ENCODE measurements at regions of chr18 and their contacts with region 1.

Region 1: DNA sequence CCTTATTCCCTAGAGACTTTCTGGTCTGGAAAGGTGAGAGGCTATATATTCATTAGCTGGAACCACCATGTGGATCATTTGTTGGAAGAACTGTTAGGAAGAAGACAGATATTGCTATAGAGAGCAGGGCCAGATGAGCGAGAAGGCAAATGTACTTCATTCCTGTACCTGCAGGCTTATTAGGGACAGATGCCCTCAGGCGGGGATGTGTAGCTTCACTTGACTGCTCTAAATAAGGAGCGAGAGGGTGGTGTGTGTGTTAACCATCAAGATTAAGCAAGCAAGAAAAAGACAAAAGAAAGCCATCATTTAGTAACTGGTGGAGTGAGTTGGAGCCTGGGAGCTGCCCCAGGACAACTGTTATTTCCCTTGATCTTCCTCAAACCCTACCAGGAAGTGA is 36.4 kb downstream of the NEDD4L start:
- DNase-seq: no peak
- ATAC-seq: no peak
- H3K4me3 ChIP-seq: no peak overlapping the region
- H3K27ac ChIP-seq: no peak overlapping the region
- H3K4me1 ChIP-seq: no peaks in the 10 kb centered on the region
- H3K27me3 ChIP-seq: no peaks in the 10 kb centered on the region
- CTCF ChIP-seq: no peak

Region 2: DNA sequence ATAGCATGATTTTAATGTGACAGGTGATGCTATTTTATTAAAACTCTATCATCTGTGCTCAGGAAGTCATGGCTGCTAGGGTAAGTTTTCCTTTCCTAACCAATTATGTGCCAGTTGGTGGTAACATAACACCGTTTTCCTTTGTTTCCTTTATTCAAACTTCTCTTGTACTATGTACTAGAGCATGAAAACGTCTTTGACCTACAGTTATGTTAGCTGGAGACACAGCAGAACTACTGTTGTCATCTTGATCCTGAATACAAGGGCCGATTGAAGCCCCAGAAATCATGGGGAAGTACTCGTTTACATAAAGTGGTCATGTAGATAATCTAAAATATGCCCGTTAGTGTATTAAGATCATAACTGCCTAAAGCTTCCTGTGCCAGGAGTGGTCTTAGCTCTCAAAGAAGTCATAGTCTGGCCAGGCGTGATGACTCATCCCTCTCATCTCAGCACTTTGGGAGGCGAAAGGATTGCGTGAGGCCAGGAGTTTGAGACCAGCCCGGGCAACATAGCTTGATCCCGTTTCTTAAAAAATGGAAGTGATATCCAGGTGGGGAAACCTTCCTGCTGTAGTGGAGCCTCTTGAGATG is 15.9 kb before region 1 on chr18:
- CTCF ChIA-PET with region 1: interaction called, 13 read pairs
- POLR2A ChIA-PET with region 1: no interaction called
- in situ Hi-C with region 1: no loop called
- intact Hi-C with region 1: no loop called
- DNase-seq: no peak
- ATAC-seq: no peak
- H3K4me3 ChIP-seq: no peak overlapping the region
- H3K27ac ChIP-seq: no peak overlapping the region
- H3K4me1 ChIP-seq: 0 out of 2 replicates have a peak, but pooled peaks cover 4% of the 10 kb centered on the region
- H3K27me3 ChIP-seq: no peaks in the 10 kb centered on the region
- CTCF ChIP-seq: no peak